Activated CD4-positive, alpha-beta T cell treated with anti-CD3 and anti-CD28 coated beads for 36 hours (primary cell): ENCODE measurements at regions of chr4 and their contacts with region 1.

Region 1: DNA sequence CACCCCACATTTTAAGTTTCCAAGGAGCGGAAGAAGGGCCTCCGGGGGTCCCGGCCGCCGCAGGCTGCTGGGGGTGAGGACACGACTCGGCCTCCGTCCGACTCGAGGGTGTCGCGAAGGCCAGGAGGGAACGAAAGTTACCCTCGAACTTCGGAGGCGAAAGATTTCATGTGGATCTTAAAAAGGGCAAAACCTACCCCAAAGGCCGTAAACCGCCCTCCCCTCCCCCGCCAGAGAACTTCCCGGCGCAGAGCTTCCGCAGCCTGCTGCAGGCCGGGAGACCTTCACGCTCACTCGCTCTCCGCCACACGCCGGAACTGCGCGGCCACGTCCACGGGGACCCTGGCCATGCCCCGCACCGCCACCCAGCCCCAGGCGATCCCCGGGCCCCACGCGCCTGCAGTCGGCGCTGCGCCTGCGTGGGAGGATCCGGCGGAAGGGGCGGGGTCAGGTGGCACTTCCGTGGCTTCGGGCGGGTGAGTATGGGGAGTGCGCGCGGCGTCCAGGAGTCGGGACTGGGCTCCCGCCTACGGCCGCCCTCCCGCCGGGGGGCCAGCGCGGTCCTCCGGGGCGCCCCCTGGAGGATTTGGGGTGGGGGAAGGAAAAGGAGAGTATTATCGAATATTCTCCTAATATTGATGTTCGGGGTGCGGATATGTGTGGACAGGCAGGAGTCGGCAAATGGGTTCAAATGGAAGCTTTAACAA is at the start of gene MMAA:
- DNase-seq: peak; percentile 98
- ATAC-seq: peak; percentile 84
- H3K4me3 Mint-ChIP-seq: peak within 1 kb of the TSS; percentile 95
- H3K27ac Mint-ChIP-seq: peak within 1 kb of the TSS; percentile 97
- H3K4me1 Mint-ChIP-seq: peaks cover 49% of the 10 kb centered on the region
- H3K27me3 Mint-ChIP-seq: no peaks in the 10 kb centered on the region
- total RNA-seq, gene MMAA: 19.2 to 20.8 TPM

Region 2: GRCh38 chr4:145180298-145181090 is 438.6 kb before region 1 on chr4 and contains the start of gene OTUD4:
- CTCF ChIA-PET with region 1: interaction called, 3 read pairs
- POLR2A ChIA-PET with region 1: no interaction called
- intact Hi-C with region 1: loop called (anchors 1 kb)
- DNase-seq: peak; percentile 97
- ATAC-seq: peak; percentile 84
- H3K4me3 Mint-ChIP-seq: peak within 1 kb of the TSS; percentile 91
- H3K27ac Mint-ChIP-seq: peak within 1 kb of the TSS; percentile 97
- H3K4me1 Mint-ChIP-seq: peaks cover 29% of the 10 kb centered on the region
- H3K27me3 Mint-ChIP-seq: no peaks in the 10 kb centered on the region
- total RNA-seq, gene OTUD4: 52.6 to 57.1 TPM

Region 3: GRCh38 chr4:145308598-145308997 is 310.5 kb before region 1 on chr4:
- CTCF ChIA-PET with region 1: no interaction called
- POLR2A ChIA-PET with region 1: no interaction called
- intact Hi-C with region 1: no loop called
- DNase-seq: peak; percentile 14
- ATAC-seq: no peak
- H3K4me3 Mint-ChIP-seq: no peak overlapping the region
- H3K27ac Mint-ChIP-seq: peak overlapping the region; percentile 39
- H3K4me1 Mint-ChIP-seq: peaks cover 31% of the 10 kb centered on the region
- H3K27me3 Mint-ChIP-seq: peaks cover 4% of the 10 kb centered on the region

Region 4: DNA sequence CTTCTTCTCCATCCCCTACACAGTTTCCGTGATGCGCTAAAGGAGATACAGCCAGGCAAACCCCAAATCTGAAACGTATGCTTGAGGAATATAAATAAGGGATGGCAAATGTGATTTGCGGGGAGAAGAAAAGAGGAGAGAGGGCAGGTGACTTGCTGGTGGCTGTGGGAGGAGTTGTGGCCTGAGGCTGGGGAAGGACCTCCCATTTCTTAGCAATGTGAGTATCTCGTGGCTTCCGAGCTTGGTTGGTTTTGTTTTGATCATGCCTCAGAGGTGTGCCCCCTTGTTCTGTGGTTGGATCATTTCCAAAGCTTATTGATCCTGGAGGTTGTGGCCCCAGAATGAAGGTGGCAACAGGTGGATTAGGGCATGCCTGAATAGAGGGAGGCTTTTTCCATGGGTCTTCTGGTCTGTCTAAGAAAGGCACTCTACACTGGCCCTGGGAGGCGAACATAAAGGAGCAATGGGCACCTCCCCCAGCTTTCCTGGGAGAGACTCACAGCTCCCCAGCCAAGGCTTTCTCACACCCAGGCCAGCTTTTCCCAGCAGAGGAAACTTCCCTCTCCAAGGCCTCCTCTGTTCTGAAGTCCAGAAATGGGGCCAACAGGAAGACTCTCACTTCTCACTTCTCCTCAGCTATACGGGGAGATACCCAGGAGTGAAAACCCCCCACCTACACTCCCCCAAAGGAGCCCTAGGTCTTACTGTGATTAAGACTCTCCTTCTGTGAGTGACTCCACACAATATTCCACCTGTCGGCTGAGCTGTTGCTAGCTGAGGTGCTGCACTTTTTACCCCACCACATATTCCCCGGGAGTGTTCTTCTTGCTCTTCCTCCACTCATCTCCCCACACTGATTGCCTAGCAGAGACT is 100.9 kb after region 1 on chr4:
- CTCF ChIA-PET with region 1: no interaction called
- POLR2A ChIA-PET with region 1: interaction called, 3 read pairs
- intact Hi-C with region 1: loop called in 1 of 2 experiments (anchors 1 kb)
- DNase-seq: peak; percentile 76
- ATAC-seq: peak; percentile 90
- H3K4me3 Mint-ChIP-seq: peak overlapping the region; percentile 12
- H3K27ac Mint-ChIP-seq: peak overlapping the region; percentile 67
- H3K4me1 Mint-ChIP-seq: peaks cover 15% of the 10 kb centered on the region
- H3K27me3 Mint-ChIP-seq: peaks cover 22% of the 10 kb centered on the region

Region 5: DNA sequence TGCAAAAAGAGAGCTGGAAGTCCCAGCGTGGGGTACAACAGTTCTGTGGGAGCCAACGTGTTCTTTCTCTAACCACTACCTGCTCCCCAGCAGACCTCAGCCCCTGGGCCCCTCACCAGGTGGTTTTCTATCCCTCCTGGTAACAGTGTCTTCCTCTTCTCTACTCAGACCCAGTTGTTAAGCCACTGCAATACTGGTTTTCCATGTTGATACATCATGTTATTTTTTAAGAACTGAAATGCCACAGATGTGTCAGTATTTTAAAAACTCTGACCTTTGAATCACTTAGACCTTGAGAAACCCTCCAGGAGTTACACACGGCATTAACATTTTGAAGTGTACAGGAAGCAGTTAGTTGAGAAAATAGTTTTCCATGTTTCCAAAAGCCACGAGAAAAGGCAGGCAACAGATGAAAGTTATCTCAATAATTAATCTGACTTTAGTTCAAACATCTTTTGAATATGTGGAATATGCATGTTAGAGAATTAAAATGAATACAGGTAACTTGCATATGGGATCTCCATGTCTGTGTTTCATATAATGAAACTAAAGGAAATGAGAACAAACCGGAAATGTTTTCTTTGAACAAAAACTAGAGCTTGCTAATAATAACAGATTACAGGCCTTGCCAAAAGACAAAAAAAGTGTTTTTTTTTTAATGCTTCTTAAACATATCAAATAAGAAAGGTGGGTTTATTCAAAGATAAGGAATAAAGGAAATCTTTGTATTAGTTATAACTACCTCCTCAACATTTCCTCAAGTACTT is 210.7 kb after region 1 on chr4:
- CTCF ChIA-PET with region 1: no interaction called
- POLR2A ChIA-PET with region 1: no interaction called
- intact Hi-C with region 1: loop called (anchors 1 to 5 kb)
- DNase-seq: peak; percentile 68
- ATAC-seq: peak; percentile 68
- H3K4me3 Mint-ChIP-seq: peak overlapping the region; percentile 43
- H3K27ac Mint-ChIP-seq: peak overlapping the region; percentile 77
- H3K4me1 Mint-ChIP-seq: peaks cover 44% of the 10 kb centered on the region
- H3K27me3 Mint-ChIP-seq: no peaks in the 10 kb centered on the region

Region 6: DNA sequence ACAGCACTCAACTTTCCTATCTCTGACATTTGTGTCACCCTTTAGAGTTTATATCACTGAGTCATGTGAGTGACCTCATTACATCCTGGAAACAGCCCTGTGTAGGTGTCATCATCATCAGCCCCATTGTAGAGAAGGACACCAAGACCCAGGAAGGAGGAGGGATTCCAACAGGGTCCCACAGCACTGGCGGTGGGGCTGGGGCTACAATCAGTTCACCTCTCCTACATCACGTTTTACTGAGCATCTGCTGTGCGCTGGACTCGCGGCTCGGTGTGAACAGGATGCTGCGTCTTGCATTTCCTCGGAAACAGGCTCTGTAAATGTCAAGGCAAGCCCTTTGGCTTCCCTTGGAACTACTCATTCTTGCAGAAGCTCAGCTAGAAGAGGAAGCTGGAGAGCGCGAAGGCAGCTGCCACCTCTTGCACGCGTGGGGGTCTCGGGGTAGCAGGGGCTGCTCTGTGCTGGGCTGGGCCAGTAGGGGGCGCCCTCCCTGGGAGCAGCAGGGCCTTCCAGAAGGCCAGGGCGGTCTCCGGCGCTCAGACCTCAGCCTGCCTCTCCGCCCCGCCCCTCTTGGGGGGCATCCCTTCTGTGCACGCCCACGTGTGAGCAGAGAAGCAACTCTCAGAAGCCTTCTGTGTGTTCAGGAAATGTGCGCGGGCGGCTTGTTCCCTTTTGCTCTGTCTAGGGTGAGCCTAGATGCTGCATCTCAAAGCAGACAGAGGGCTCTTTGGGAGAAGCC is 624.2 kb after region 1 on chr4:
- CTCF ChIA-PET with region 1: no interaction called
- POLR2A ChIA-PET with region 1: no interaction called
- intact Hi-C with region 1: loop called in 1 of 2 experiments (anchors 2 kb)
- DNase-seq: peak; percentile 90
- ATAC-seq: peak; percentile 79
- H3K4me3 Mint-ChIP-seq: peak overlapping the region; percentile 66
- H3K27ac Mint-ChIP-seq: peak overlapping the region; percentile 85
- H3K4me1 Mint-ChIP-seq: peaks cover 41% of the 10 kb centered on the region
- H3K27me3 Mint-ChIP-seq: no peaks in the 10 kb centered on the region